ENCODE measurements at regions of chr9 and their contacts with region 1.

Region 1: GRCh38 chr9:3508521-3509291 is 17.1 kb downstream of the RFX3 start:
- DNase-seq: peak in 2 of 3 donors; percentile 58 to 65
- H3K4me3 ChIP-seq: peak overlapping the region in 6 of 7 experiments; percentile 12 to 70 (median 40)
- H3K27ac ChIP-seq: peak overlapping the region; percentile 64 to 88
- H3K4me1 ChIP-seq: peaks cover 12 to 32% (median 18%) of the 10 kb centered on the region in 4 experiments
- H3K27me3 ChIP-seq: no peaks in the 10 kb centered on the region

Region 2: GRCh38 chr9:3525836-3526164 is 17.1 kb after region 1 on chr9 and contains the start of gene RFX3:
- CTCF ChIA-PET with region 1: interaction called, 12 read pairs
- POLR2A ChIA-PET with region 1: interaction called, 11 read pairs
- DNase-seq: peak; percentile 97 to 99 (median 98)
- H3K4me3 ChIP-seq: peak within 1 kb of the TSS; percentile 90 to 100 (median 96)
- H3K27ac ChIP-seq: peak within 1 kb of the TSS; percentile 99 to 100
- H3K4me1 ChIP-seq: peaks cover 14 to 44% (median 27%) of the 10 kb centered on the region in 4 experiments
- H3K27me3 ChIP-seq: no peaks in the 10 kb centered on the region

Region 3: GRCh38 chr9:3820643-3821042 is 311.9 kb after region 1 on chr9:
- CTCF ChIA-PET with region 1: no interaction called
- POLR2A ChIA-PET with region 1: no interaction called
- DNase-seq: no peak
- H3K4me3 ChIP-seq: no peak overlapping the region
- H3K27ac ChIP-seq: no peak overlapping the region
- H3K4me1 ChIP-seq: peaks cover 0 to 2% (median under 1%) of the 10 kb centered on the region in 4 experiments
- H3K27me3 ChIP-seq: peaks cover 0 to 2% (median 0%) of the 10 kb centered on the region in 5 experiments

Measured in common myeloid progenitor, CD34-positive (primary cell).